Sigmoid colon (tissue), 7 donors: ENCODE measurements at regions of chr18 and their contacts with region 1.

Region 1: DNA sequence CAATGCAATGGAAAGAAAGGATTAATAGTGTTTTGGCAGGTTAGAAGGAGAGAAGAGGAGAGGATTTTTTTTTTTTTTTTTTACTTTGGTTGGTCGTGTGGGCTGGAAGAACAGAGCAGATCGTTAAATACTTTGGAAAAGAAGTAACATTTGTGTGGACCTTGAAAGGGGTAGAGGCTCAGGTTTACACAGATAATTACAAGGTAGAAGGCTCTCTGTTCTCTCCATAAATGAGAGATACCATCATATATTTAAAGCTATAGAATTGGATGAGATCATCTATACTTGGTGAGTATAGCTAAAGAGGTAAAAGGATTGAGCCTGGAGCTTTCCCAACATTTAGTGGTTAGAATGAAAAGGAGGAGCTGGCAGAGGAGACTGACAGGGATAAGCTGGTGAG is 49.0 kb downstream of the SMCHD1 start:
- DNase-seq: no peak
- H3K4me3 ChIP-seq: no peak overlapping the region
- H3K27ac ChIP-seq: no peak overlapping the region
- H3K4me1 ChIP-seq: no peaks in the 10 kb centered on the region
- H3K27me3 ChIP-seq: no peaks in the 10 kb centered on the region
- CTCF ChIP-seq: no peak
- EP300 ChIP-seq: no peak
- POLR2A ChIP-seq: no peak

Region 2: GRCh38 chr18:2168022-2168421 is 536.5 kb before region 1 on chr18:
- intact Hi-C with region 1: no loop called
- DNase-seq: no peak
- H3K4me3 ChIP-seq: no peak overlapping the region
- H3K27ac ChIP-seq: no peak overlapping the region
- H3K4me1 ChIP-seq: no peaks in the 10 kb centered on the region
- H3K27me3 ChIP-seq: no peaks in the 10 kb centered on the region
- CTCF ChIP-seq: no peak
- EP300 ChIP-seq: no peak
- POLR2A ChIP-seq: no peak

Region 3: GRCh38 chr18:2758309-2758708 is 53.8 kb after region 1 on chr18:
- intact Hi-C with region 1: loop called (anchors 5 kb)
- DNase-seq: no peak
- H3K4me3 ChIP-seq: no peak overlapping the region
- H3K27ac ChIP-seq: no peak overlapping the region
- H3K4me1 ChIP-seq: peaks cover 0 to 8% (median 0%) of the 10 kb centered on the region in 4 donors
- H3K27me3 ChIP-seq: no peaks in the 10 kb centered on the region
- CTCF ChIP-seq: no peak
- EP300 ChIP-seq: no peak
- POLR2A ChIP-seq: no peak